ENCODE measurements at regions of chr17 and their contacts with region 1.

Region 1: GRCh38 chr17:41738077-41738735 is 3.8 kb upstream of the HAP1 start:
- DNase-seq: peak; percentile 57 to 89 (median 74)
- ATAC-seq: peak; percentile 89
- H3K4me3 ChIP-seq: no peak overlapping the region
- H3K4me3 Mint-ChIP-seq: no peak overlapping the region
- H3K27ac ChIP-seq: no peak overlapping the region
- H3K27ac Mint-ChIP-seq: peak overlapping the region; percentile 53
- H3K4me1 ChIP-seq: peaks cover 21% of the 10 kb centered on the region
- H3K4me1 Mint-ChIP-seq: no peaks in the 10 kb centered on the region
- H3K27me3 ChIP-seq: peaks cover 36 to 44% of the 10 kb centered on the region in 2 experiments
- H3K27me3 Mint-ChIP-seq: peaks cover 39% of the 10 kb centered on the region
- CTCF ChIP-seq: peak; percentile 97

Region 2: DNA sequence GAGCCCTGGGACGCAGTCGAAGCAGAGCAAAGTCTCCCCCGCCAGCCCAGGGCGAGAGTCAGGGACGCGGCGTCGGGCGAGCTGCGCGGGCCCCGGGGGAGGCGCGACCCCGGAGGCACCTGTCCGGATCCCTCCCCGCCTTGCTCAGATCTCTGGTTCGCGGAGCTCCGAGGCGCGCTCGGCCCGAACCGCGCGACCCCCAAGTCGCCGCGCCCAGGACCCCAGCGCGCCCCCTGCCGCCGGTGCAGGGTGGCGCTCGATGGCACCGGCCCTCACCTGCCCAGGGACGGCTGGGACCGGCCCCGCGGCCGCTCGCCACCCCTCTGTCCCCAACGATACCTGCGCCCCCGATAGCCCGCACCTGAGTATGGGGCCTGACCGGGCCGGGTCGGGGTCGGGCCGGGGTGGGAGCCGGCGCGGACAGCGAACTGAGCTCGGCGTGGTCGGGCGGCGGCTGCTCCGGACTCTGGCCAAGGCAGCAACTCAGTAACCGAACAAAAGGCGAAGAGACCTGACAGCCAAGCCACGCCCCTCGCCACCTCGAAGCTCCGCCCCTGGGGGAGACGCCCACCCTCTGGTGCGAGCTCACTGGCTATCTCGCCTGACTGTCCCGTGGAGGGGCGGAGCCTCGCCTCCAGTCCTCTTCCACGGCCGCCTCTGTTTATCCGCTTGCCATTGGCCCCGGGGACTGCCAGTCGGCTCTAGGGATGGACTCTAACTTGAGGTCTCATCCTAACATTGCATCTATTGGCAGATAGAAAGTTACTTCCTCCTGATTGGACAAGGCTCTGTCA is 48.2 kb after region 1 on chr17 and contains the start of gene JUP:
- CTCF ChIA-PET with region 1: no interaction called
- POLR2A ChIA-PET with region 1: no interaction called
- intact Hi-C with region 1: loop called in 1 of 2 experiments (anchors 5 kb)
- DNase-seq: peak; percentile 74 to 94 (median 85)
- ATAC-seq: peak; percentile 95
- H3K4me3 ChIP-seq: peak within 1 kb of the TSS; percentile 53
- H3K4me3 Mint-ChIP-seq: peak within 1 kb of the TSS; percentile 90
- H3K27ac ChIP-seq: no peak within 1 kb of the TSS
- H3K27ac Mint-ChIP-seq: no peak within 1 kb of the TSS
- H3K4me1 ChIP-seq: peaks cover 24% of the 10 kb centered on the region
- H3K4me1 Mint-ChIP-seq: peaks cover 37% of the 10 kb centered on the region
- H3K27me3 ChIP-seq: peaks cover 22 to 29% of the 10 kb centered on the region in 2 experiments
- H3K27me3 Mint-ChIP-seq: peaks cover 38% of the 10 kb centered on the region
- CTCF ChIP-seq: no peak
- total RNA-seq, gene JUP: 0.88 to 1.1 TPM

Region 3: GRCh38 chr17:41801374-41802271 is 63.4 kb after region 1 on chr17:
- CTCF ChIA-PET with region 1: interaction called, 6 read pairs
- POLR2A ChIA-PET with region 1: no interaction called
- intact Hi-C with region 1: loop called (anchors 1 kb)
- DNase-seq: peak; percentile 58 to 86 (median 72)
- ATAC-seq: peak; percentile 93
- H3K4me3 ChIP-seq: no peak overlapping the region
- H3K4me3 Mint-ChIP-seq: no peak overlapping the region
- H3K27ac ChIP-seq: no peak overlapping the region
- H3K27ac Mint-ChIP-seq: no peak overlapping the region
- H3K4me1 ChIP-seq: peaks cover 12% of the 10 kb centered on the region
- H3K4me1 Mint-ChIP-seq: peaks cover 5% of the 10 kb centered on the region
- H3K27me3 ChIP-seq: no peaks in the 10 kb centered on the region
- H3K27me3 Mint-ChIP-seq: peaks cover 5% of the 10 kb centered on the region
- CTCF ChIP-seq: peak; percentile 96

Region 4: DNA sequence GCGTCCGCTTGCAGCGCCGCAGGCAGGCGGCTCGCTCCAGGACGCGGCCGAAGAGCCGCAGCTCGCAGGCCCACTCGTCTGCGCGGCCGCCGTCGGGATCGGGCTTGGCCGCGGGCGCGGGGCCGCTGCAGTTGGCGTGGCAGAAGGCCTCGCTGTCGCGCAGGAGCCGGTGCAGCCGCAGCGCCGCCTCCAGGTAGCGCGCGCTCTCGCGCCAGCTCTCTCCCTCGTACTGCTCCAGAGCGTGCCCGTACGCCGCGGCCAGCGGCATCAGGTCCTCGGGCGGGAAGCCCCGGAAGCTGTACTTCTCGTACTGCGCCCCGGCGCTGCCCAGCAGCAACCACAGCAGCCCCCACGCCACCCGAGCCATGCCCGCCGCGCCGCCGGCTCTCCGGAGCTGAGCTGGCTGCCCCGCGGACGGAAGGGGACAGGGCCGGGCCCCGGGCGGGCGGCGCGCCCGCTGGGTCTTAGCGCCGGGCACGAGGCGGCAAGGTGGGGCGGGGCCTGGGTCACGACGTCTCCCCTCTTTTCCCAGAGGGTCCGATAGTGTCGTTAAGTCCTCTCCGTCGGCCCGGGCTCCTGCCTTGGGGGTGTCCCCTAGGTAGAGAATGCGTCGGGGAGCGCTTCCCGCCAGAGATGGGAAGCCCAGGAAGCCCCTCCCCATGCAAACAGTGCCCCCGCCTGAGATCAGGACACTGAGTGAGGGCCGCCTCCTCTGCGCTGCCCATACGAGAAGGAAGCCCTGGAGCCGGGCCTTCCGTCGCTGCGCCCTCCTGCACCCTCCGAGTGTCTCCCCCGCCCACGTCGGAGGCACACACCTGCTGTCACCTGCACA is 73.6 kb after region 1 on chr17 and contains the start of gene P3H4:
- CTCF ChIA-PET with region 1: interaction called, 8 read pairs
- POLR2A ChIA-PET with region 1: no interaction called
- intact Hi-C with region 1: loop called in 1 of 2 experiments (anchors 2 kb)
- DNase-seq: peak; percentile 44 to 90 (median 70)
- ATAC-seq: peak; percentile 91
- H3K4me3 ChIP-seq: peak within 1 kb of the TSS; percentile 60
- H3K4me3 Mint-ChIP-seq: peak within 1 kb of the TSS; percentile 97
- H3K27ac ChIP-seq: no peak within 1 kb of the TSS
- H3K27ac Mint-ChIP-seq: peak within 1 kb of the TSS; percentile 36
- H3K4me1 ChIP-seq: peaks cover 34% of the 10 kb centered on the region
- H3K4me1 Mint-ChIP-seq: peaks cover 22% of the 10 kb centered on the region
- H3K27me3 ChIP-seq: no peaks in the 10 kb centered on the region
- H3K27me3 Mint-ChIP-seq: no peaks in the 10 kb centered on the region
- CTCF ChIP-seq: peak; percentile 68
- total RNA-seq, gene P3H4: 1.3 to 2.3 TPM

Region 5: GRCh38 chr17:41885733-41886132 is 147.5 kb after region 1 on chr17:
- CTCF ChIA-PET with region 1: no interaction called
- POLR2A ChIA-PET with region 1: no interaction called
- intact Hi-C with region 1: loop called (anchors 1 to 2 kb)
- DNase-seq: peak in 2 of 14 experiments; percentile 16 to 25
- ATAC-seq: no peak
- H3K4me3 ChIP-seq: no peak overlapping the region
- H3K4me3 Mint-ChIP-seq: no peak overlapping the region
- H3K27ac ChIP-seq: no peak overlapping the region
- H3K27ac Mint-ChIP-seq: no peak overlapping the region
- H3K4me1 ChIP-seq: no peaks in the 10 kb centered on the region
- H3K4me1 Mint-ChIP-seq: no peaks in the 10 kb centered on the region
- H3K27me3 ChIP-seq: no peaks in the 10 kb centered on the region
- H3K27me3 Mint-ChIP-seq: no peaks in the 10 kb centered on the region
- CTCF ChIP-seq: peak; percentile 20

Region 6: GRCh38 chr17:41918314-41919164 is 180.3 kb after region 1 on chr17 and contains the start of gene ACLY:
- CTCF ChIA-PET with region 1: no interaction called
- POLR2A ChIA-PET with region 1: no interaction called
- intact Hi-C with region 1: no loop called
- DNase-seq: peak; percentile 87 to 98 (median 94)
- ATAC-seq: peak; percentile 99
- H3K4me3 ChIP-seq: peak within 1 kb of the TSS; percentile 90
- H3K4me3 Mint-ChIP-seq: peak within 1 kb of the TSS; percentile 95
- H3K27ac ChIP-seq: peak within 1 kb of the TSS; percentile 69 to 74
- H3K27ac Mint-ChIP-seq: peak within 1 kb of the TSS; percentile 64
- H3K4me1 ChIP-seq: peaks cover 35% of the 10 kb centered on the region
- H3K4me1 Mint-ChIP-seq: peaks cover 27% of the 10 kb centered on the region
- H3K27me3 ChIP-seq: no peaks in the 10 kb centered on the region
- H3K27me3 Mint-ChIP-seq: no peaks in the 10 kb centered on the region
- CTCF ChIP-seq: no peak
- total RNA-seq, gene ACLY: 25.9 to 28.3 TPM

Region 7: DNA sequence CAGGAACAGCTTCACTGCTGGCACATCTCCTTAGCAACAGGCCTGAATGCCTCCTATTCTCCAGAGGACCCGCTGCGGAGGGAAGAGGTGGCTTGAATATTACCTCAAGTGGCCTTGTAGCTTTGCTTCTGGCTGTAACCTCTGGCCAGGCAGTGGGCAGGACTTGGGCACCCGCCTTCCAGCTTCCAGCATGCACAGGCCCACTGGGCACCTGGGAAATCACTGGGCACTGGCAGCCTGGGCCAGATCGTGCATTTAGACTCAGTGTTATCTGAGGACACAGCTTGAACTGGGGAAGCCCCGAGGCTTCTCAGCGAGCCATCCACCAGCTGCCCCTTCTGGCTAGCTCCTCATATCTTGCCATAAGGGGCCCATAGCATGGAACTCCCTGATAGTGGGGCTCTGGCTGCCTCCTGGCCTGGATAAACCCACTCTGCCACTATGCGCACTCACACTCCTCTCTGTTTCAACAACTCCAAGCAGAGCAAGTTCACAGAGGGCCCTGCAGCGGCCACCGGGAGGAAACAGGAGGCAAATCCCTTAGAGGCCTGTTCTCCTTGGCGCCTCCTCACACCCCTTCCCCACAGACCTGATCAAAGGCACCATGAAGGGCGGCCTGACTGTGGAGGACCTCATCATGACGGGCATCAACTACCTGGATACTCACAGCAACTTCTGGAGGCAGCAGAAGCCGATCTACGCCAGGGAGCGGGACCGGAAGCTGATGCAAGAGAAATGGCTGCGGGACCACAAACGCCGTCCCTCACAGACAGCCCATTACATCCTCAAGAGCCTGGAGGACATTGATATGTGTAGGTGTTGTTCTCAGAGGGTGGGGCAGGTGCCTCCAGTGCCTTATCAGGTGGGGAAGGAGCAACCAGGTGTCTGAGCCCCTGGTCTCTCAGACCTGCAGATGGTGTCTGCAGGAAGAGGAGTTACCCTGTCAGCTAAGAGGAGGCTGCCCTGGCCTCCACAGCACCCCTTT is 200.1 kb after region 1 on chr17:
- CTCF ChIA-PET with region 1: no interaction called
- POLR2A ChIA-PET with region 1: no interaction called
- intact Hi-C with region 1: no loop called
- DNase-seq: no peak
- ATAC-seq: no peak
- H3K4me3 ChIP-seq: no peak overlapping the region
- H3K4me3 Mint-ChIP-seq: no peak overlapping the region
- H3K27ac ChIP-seq: no peak overlapping the region
- H3K27ac Mint-ChIP-seq: no peak overlapping the region
- H3K4me1 ChIP-seq: no peaks in the 10 kb centered on the region
- H3K4me1 Mint-ChIP-seq: no peaks in the 10 kb centered on the region
- H3K27me3 ChIP-seq: no peaks in the 10 kb centered on the region
- H3K27me3 Mint-ChIP-seq: no peaks in the 10 kb centered on the region
- CTCF ChIP-seq: no peak

Region 8: GRCh38 chr17:42112552-42113176 is 374.5 kb after region 1 on chr17 and contains the start of gene DHX58:
- CTCF ChIA-PET with region 1: no interaction called
- POLR2A ChIA-PET with region 1: no interaction called
- intact Hi-C with region 1: loop called (anchors 5 kb)
- DNase-seq: peak; percentile 65 to 93 (median 73)
- ATAC-seq: peak; percentile 79
- H3K4me3 ChIP-seq: peak within 1 kb of the TSS; percentile 58
- H3K4me3 Mint-ChIP-seq: peak within 1 kb of the TSS; percentile 92
- H3K27ac ChIP-seq: peak within 1 kb of the TSS; percentile 66 to 79
- H3K27ac Mint-ChIP-seq: peak within 1 kb of the TSS; percentile 87
- H3K4me1 ChIP-seq: peaks cover 48% of the 10 kb centered on the region
- H3K4me1 Mint-ChIP-seq: peaks cover 50% of the 10 kb centered on the region
- H3K27me3 ChIP-seq: no peaks in the 10 kb centered on the region
- H3K27me3 Mint-ChIP-seq: no peaks in the 10 kb centered on the region
- CTCF ChIP-seq: no peak
- total RNA-seq, gene DHX58: 33.5 to 35.6 TPM

Measured in CD4-positive, alpha-beta T cell (primary cell).